ENCODE measurements at regions of chr12 and their contacts with region 1.

Region 1: GRCh38 chr12:38327356-38327755 is 10.8 kb downstream of the ALG10B start:
- H3K4me3 ChIP-seq: no peak overlapping the region
- H3K27ac ChIP-seq: no peak overlapping the region
- H3K4me1 ChIP-seq: no peaks in the 10 kb centered on the region
- CTCF ChIP-seq: no peak

Region 2: DNA sequence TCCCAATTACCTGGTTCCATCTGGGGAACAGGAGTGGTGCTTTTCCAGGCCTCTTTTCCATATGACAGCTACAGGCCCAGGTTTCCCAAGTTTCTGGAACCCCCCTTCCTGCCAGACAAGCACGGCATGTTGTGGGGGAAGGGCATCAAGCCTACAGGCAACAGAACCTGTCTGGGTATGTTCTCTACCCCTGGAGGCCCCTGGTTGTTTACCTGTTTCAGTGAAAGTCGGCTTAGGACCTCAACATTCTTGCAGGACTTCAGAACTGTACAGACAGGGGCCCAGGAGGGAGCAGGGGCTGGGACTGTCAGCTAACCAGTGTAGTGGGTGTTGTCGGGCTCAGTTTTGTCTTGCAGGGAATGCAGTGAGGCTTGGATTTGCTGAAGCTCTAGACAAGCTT is 121.8 kb before region 1 on chr12:
- CTCF ChIA-PET with region 1: no interaction called
- POLR2A ChIA-PET with region 1: no interaction called
- H3K4me3 ChIP-seq: no peak overlapping the region
- H3K27ac ChIP-seq: no peak overlapping the region
- H3K4me1 ChIP-seq: no peaks in the 10 kb centered on the region
- CTCF ChIP-seq: no peak

Region 3: DNA sequence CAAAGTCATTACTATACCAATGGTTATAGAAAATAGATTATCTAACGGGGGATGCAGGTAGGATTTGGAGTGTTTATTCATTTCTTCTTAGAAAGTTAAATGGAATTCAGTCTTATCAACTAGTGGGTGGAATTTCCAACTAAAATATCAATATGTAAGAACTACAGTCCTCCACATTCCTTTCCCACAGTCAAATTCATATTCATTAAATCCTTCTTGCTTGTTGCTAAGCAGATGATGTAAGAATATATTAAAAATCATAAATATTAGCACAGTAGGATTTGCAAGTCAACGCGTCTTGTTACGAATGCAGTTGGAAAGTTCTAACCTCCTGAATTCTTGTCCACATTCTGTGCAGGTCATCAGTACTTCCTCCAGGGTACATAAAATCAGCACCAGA is 318.8 kb after region 1 on chr12:
- CTCF ChIA-PET with region 1: no interaction called
- POLR2A ChIA-PET with region 1: no interaction called
- H3K4me3 ChIP-seq: no peak overlapping the region
- H3K27ac ChIP-seq: no peak overlapping the region
- H3K4me1 ChIP-seq: no peaks in the 10 kb centered on the region
- CTCF ChIP-seq: no peak

Region 4: GRCh38 chr12:39103552-39104165 is 776.3 kb after region 1 on chr12:
- CTCF ChIA-PET with region 1: interaction called, 11 read pairs
- POLR2A ChIA-PET with region 1: no interaction called
- H3K4me3 ChIP-seq: no peak overlapping the region
- H3K27ac ChIP-seq: no peak overlapping the region
- H3K4me1 ChIP-seq: no peaks in the 10 kb centered on the region
- CTCF ChIP-seq: peak; percentile 73

Measured in HEK293 (cell line).